IMR-90 (cell line): ENCODE measurements at regions of chr15 and their contacts with region 1.

Region 1: DNA sequence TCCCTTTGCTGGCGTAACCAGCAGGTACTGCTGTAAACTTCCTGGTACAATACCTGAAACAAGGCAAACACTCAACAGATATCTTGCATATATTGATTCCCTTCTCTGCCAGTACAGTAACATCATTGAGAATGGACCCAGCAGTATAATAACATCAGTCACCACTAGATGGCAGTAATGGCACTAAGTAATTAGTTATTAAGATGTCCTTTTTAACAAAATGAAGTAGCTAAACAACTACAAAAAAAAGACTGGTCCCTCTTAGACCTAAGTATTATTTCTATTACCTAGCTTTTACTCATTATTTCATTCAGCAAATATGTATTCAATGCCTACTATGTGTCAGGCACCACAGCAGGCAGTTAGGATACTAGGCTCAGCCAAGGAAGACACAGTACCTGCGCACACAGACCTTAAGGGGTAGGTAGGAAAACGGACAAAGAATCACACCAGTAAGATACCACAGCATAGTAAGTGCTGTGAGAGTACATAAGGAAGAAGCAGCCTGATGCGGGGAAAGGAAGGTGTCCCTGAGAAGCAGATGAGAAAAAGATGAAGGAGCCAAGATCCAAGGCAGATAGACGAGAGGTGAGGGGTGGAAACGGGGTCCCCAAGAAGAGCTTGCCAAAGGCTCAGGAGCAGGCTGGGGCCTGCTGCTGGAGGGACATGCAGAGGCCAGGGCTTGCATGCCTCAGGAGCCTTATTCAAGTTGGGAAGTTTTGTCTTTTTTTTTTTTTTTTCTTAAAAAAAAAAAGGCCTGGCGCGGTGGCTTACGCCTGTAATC is 102.8 kb upstream of the CHD2 start:
- DNase-seq: peak; percentile 81
- ATAC-seq: peak; percentile 69
- H3K4me3 ChIP-seq: no peak overlapping the region
- H3K27ac ChIP-seq: peak overlapping the region; percentile 60; the same call in 1 of the 2 replicates
- H3K4me1 ChIP-seq: peaks cover 12% of the 10 kb centered on the region
- H3K27me3 ChIP-seq: no peaks in the 10 kb centered on the region
- CTCF ChIP-seq: peak; percentile 75
- POLR2A ChIP-seq: no peak
- RAD21 ChIP-seq: peak; percentile 73

Region 2: DNA sequence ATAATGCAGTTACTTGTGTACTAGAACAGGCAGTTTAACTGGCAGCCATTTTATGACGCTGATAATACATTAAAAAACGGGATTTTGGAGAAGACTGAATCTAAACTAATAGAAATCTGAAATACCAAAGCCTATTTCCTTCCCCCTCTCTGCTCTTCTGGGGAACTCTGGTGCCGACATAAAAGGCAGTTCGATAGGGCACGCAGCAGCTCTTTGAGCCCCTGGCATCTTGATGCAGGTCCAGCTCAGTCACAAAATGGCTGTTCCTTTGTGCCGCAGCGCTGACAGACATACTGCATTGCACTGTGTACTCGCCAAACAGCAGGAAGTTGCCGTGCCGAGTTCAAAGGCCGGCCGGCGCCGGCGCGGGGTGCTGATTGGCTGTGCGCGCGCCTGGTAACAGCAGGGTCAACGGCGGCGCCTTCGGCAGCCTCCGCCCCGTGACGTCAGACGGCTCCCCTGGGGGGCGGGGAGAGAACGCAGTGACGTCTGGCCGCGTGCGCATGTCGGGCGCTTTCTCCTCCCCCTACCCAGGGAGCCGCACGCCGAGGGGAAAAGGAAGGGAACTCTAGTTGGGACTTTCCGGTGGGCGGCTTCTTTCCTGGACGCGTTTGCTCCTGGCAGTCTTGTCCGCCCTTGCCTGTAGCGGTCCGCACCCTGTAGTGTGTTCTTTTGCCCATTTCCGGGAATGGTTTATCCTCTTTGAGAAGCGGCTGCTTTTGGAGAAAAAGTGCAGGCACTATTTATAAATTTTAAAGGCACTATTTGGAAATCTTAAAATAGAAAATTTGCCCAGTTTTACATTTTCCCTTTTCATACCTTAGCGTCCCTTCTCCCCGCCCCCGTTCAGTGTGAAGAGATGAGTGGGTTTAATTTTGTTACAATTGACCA is 106.8 kb after region 1 on chr15:
- CTCF ChIA-PET with region 1: interaction called, 3 read pairs
- POLR2A ChIA-PET with region 1: interaction called, 17 read pairs
- dilution Hi-C with region 1: no loop called
- in situ Hi-C with region 1: no loop called
- intact Hi-C with region 1: no loop called
- DNase-seq: peak; percentile 98
- ATAC-seq: peak; percentile 85
- H3K4me3 ChIP-seq: peak overlapping the region; percentile 54
- H3K27ac ChIP-seq: peak overlapping the region; percentile 98
- H3K4me1 ChIP-seq: peaks cover 11% of the 10 kb centered on the region
- H3K27me3 ChIP-seq: no peaks in the 10 kb centered on the region
- CTCF ChIP-seq: no peak
- POLR2A ChIP-seq: peak; percentile 98
- RAD21 ChIP-seq: no peak

Region 3: GRCh38 chr15:92968926-92969651 is 171.7 kb after region 1 on chr15:
- CTCF ChIA-PET with region 1: no interaction called
- POLR2A ChIA-PET with region 1: interaction called, 3 read pairs
- dilution Hi-C with region 1: no loop called
- in situ Hi-C with region 1: no loop called
- intact Hi-C with region 1: loop called (anchors 5 kb)
- DNase-seq: no peak
- ATAC-seq: no peak
- H3K4me3 ChIP-seq: no peak overlapping the region
- H3K27ac ChIP-seq: no peak overlapping the region
- H3K4me1 ChIP-seq: peaks cover 3% of the 10 kb centered on the region; the same call in 1 of the 2 replicates
- H3K27me3 ChIP-seq: no peaks in the 10 kb centered on the region
- CTCF ChIP-seq: no peak
- POLR2A ChIP-seq: no peak
- RAD21 ChIP-seq: no peak

Region 4: GRCh38 chr15:94119923-94120775 is 1322.8 kb after region 1 on chr15:
- CTCF ChIA-PET with region 1: interaction called, 3 read pairs
- POLR2A ChIA-PET with region 1: no interaction called
- dilution Hi-C with region 1: no loop called
- in situ Hi-C with region 1: loop called (anchors 25 kb)
- intact Hi-C with region 1: no loop called
- DNase-seq: peak; percentile 82
- ATAC-seq: peak; percentile 92
- H3K4me3 ChIP-seq: no peak overlapping the region
- H3K27ac ChIP-seq: no peak overlapping the region
- H3K4me1 ChIP-seq: no peaks in the 10 kb centered on the region
- H3K27me3 ChIP-seq: no peaks in the 10 kb centered on the region
- CTCF ChIP-seq: peak; percentile 99
- POLR2A ChIP-seq: no peak
- RAD21 ChIP-seq: peak; percentile 91